CD8-positive, alpha-beta T cell (primary cell): ENCODE measurements at regions of chrX and their contacts with region 1.

Region 1: GRCh38 chrX:38803586-38804431 is 2.5 kb downstream of the MID1IP1 start:
- DNase-seq: peak in 8 of 9 experiments; percentile 29 to 77 (median 54)
- ATAC-seq: peak; percentile 36
- H3K4me3 ChIP-seq: peak overlapping the region; percentile 80 to 84
- H3K4me3 Mint-ChIP-seq: peak overlapping the region; percentile 95
- H3K27ac ChIP-seq: peak overlapping the region; percentile 71 to 77
- H3K27ac Mint-ChIP-seq: peak overlapping the region; percentile 98
- H3K4me1 ChIP-seq: peaks cover 7% of the 10 kb centered on the region
- H3K4me1 Mint-ChIP-seq: peaks cover 32% of the 10 kb centered on the region
- H3K27me3 ChIP-seq: no peaks in the 10 kb centered on the region
- H3K27me3 Mint-ChIP-seq: no peaks in the 10 kb centered on the region
- CTCF ChIP-seq: no peak

Region 2: DNA sequence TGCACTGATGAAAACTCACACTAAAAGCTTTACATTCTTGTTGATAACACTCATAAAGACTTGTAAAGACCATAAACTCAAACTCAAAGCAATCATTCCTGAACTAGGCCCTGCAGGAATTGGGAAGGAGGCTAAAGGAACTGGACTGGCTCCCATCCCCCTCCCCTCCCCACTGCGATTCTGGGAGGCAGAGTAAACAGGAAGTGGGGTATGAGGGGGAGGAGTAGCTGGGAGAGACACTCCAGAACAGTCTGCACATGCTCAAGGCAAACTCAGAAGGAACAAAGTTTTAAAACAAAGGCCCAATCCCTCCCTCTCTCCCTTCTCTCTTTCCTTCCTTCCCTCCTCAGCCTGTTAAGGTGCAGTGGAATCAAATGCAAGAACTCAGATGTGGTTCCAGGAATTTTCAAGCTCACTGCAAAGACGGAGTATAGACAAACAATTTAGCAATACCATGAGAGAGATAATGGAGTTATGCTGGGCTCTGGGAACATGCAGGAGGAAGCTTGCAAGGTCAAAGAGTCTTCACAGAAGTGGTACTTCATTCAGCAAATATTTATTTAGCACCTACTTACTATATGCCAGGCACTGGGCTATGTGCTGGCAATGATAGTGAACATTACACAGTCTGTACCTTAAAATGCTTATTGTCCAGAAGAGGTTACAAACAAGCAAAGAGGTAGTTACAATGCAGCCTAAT is 13.3 kb after region 1 on chrX:
- CTCF ChIA-PET with region 1: interaction called, 9 read pairs
- POLR2A ChIA-PET with region 1: interaction called, 10 read pairs
- intact Hi-C with region 1: no loop called
- DNase-seq: peak in 3 of 9 experiments; percentile 23 to 55 (median 26)
- ATAC-seq: peak; percentile 48
- H3K4me3 ChIP-seq: no peak overlapping the region
- H3K4me3 Mint-ChIP-seq: peak overlapping the region; percentile 27
- H3K27ac ChIP-seq: peak overlapping the region; percentile 3 to 61
- H3K27ac Mint-ChIP-seq: no peak overlapping the region
- H3K4me1 ChIP-seq: peaks cover 47% of the 10 kb centered on the region
- H3K4me1 Mint-ChIP-seq: peaks cover 12% of the 10 kb centered on the region
- H3K27me3 ChIP-seq: no peaks in the 10 kb centered on the region
- H3K27me3 Mint-ChIP-seq: no peaks in the 10 kb centered on the region
- CTCF ChIP-seq: no peak

Region 3: DNA sequence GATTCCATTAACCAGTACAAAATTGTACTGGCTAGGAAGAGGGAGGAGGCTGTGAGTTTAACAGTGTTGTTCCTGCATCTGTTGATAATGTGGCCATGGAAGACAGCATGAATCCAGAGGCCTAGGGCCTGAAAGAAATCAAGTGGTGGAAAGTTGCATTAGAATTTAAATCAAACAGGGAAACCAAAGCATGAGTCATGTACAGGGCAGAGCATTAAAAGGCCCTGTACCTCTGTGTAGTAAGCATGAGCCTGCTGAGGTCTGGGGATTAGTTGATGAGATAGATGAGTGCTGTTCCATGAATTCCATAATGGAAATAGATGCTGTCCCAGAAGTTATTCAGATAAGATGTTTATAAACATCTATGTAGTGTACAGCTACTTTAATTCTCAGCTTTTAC is 55.8 kb after region 1 on chrX:
- CTCF ChIA-PET with region 1: no interaction called
- POLR2A ChIA-PET with region 1: no interaction called
- intact Hi-C with region 1: loop called in 1 of 2 experiments (anchors 10 kb)
- DNase-seq: no peak
- ATAC-seq: no peak
- H3K4me3 ChIP-seq: no peak overlapping the region
- H3K4me3 Mint-ChIP-seq: no peak overlapping the region
- H3K27ac ChIP-seq: no peak overlapping the region
- H3K27ac Mint-ChIP-seq: no peak overlapping the region
- H3K4me1 ChIP-seq: peaks cover 10% of the 10 kb centered on the region
- H3K4me1 Mint-ChIP-seq: peaks cover 5% of the 10 kb centered on the region
- H3K27me3 ChIP-seq: no peaks in the 10 kb centered on the region
- H3K27me3 Mint-ChIP-seq: no peaks in the 10 kb centered on the region
- CTCF ChIP-seq: no peak

Region 4: DNA sequence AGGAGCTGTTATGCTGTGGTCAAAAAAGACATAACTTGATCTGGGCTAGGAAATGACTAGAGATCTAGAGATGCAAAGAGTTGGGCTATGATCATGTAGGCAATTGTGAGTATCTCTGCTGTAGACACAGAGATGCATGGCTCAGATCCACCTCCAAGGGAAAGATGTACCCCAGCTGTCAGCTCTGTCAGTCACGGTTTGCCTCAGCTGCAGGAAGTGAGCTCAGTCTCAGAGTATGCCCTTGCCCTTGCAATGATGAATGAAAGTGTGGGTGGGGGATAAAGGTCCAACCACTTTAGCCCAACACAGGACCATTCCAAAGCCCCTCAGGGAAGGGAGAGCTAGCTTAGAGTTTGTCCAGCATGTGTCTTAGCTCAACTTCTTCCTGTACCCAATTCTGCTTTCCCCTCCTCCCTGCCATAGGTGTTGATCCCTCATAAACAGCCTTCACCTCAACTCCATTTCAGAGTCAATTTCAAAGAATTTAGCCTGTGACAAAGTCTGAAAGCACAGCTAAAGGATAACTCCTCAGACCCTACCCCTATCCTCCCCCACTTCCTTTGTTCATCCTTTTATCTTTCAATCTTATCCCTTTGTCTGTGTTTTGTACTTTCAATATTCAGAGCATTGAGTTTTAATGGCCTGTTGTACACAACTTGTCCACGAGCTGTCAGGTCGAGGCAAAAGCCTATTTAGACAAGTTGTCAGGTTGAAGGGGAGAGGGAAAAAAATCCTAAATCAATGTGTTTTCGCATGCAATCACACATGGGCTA is 88.0 kb after region 1 on chrX:
- CTCF ChIA-PET with region 1: no interaction called
- POLR2A ChIA-PET with region 1: no interaction called
- intact Hi-C with region 1: loop called in 1 of 2 experiments (anchors 10 kb)
- DNase-seq: no peak
- ATAC-seq: no peak
- H3K4me3 ChIP-seq: no peak overlapping the region
- H3K4me3 Mint-ChIP-seq: no peak overlapping the region
- H3K27ac ChIP-seq: no peak overlapping the region
- H3K27ac Mint-ChIP-seq: no peak overlapping the region
- H3K4me1 ChIP-seq: peaks cover 5% of the 10 kb centered on the region
- H3K4me1 Mint-ChIP-seq: peaks cover 9% of the 10 kb centered on the region
- H3K27me3 ChIP-seq: no peaks in the 10 kb centered on the region
- H3K27me3 Mint-ChIP-seq: no peaks in the 10 kb centered on the region
- CTCF ChIP-seq: no peak

Region 5: GRCh38 chrX:39149761-39150160 is 346.0 kb after region 1 on chrX:
- CTCF ChIA-PET with region 1: interaction called, 4 read pairs
- POLR2A ChIA-PET with region 1: no interaction called
- intact Hi-C with region 1: loop called in 1 of 2 experiments (anchors 1 kb)
- DNase-seq: peak; percentile 22 to 72 (median 54)
- ATAC-seq: no peak
- H3K4me3 ChIP-seq: no peak overlapping the region
- H3K4me3 Mint-ChIP-seq: no peak overlapping the region
- H3K27ac ChIP-seq: no peak overlapping the region
- H3K27ac Mint-ChIP-seq: no peak overlapping the region
- H3K4me1 ChIP-seq: no peaks in the 10 kb centered on the region
- H3K4me1 Mint-ChIP-seq: no peaks in the 10 kb centered on the region
- H3K27me3 ChIP-seq: no peaks in the 10 kb centered on the region
- H3K27me3 Mint-ChIP-seq: no peaks in the 10 kb centered on the region
- CTCF ChIP-seq: peak; percentile 54